Activated naive CD4-positive, alpha-beta T cell treated with anti-CD3 and anti-CD28 coated beads for 36 hours (primary cell): ENCODE measurements at regions of chr4 and their contacts with region 1.

Region 1: GRCh38 chr4:51906167-51906958 is 63.4 kb downstream of the DCUN1D4 start:
- DNase-seq: no peak
- H3K4me3 Mint-ChIP-seq: no peak overlapping the region
- H3K27ac Mint-ChIP-seq: no peak overlapping the region
- H3K4me1 Mint-ChIP-seq: peaks cover 2% of the 10 kb centered on the region
- H3K27me3 Mint-ChIP-seq: no peaks in the 10 kb centered on the region

Region 2: DNA sequence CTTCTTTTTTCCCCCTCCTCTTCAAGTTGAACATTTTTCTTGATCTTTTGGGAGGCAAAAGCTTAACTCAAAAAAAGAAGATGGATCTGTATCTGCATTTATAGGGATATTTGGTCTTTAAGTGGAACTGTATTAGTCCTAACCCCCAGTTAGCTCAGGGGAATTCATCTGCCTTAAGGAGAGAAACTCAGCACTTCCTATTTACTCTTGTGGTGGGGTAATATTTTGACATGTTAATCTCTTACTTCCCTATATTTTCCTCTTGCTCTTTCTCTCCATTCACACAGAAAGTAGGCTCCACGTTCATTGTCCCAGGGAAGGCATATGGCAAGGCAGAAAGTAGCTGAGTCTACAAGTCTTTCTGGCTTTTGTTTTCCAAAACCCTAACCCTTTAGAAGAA is 108.5 kb after region 1 on chr4:
- CTCF ChIA-PET with region 1: no interaction called
- intact Hi-C with region 1: loop called (anchors 5 kb)
- DNase-seq: no peak
- H3K4me3 Mint-ChIP-seq: no peak overlapping the region
- H3K27ac Mint-ChIP-seq: no peak overlapping the region
- H3K4me1 Mint-ChIP-seq: no peaks in the 10 kb centered on the region
- H3K27me3 Mint-ChIP-seq: no peaks in the 10 kb centered on the region